ENCODE measurements at regions of chr12 and their contacts with region 1.

Region 1: DNA sequence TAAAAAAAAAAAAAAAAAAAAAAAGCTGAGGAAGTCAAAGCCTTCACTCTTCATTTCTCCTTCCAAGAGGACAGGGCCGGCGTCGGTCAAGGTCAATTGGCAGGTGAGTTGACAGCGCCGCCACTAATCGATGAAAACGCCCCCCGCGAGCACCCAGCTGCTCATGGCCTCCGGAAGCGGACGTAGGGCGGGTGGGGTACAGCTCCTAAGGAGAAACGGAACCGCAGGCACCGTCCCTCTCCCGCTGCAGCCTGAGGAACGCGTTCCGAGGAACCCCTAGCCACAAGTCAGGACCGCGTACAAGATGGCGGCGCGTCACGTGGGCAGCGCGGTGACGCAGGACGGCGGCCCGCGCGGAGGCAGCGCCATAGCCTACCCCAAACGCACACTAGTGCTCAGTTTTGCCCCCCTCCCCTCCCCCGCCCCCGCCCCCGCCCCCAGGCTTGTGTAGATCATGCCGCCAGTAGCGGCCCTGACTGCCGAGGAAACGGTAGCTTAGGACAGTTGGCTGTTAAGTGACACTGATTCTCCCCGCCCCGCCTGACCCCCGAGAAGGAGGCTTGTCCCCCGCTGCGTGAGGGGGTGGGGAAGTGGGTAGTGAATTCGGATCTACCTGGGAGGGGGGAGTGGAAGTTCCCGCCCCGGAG is at the start of gene ATF1:
- DNase-seq: peak; percentile 94
- CTCF ChIP-seq: no peak

Region 2: GRCh38 chr12:50776749-50777728 is 13.3 kb after region 1 on chr12:
- CTCF ChIA-PET with region 1: interaction called, 53 read pairs
- POLR2A ChIA-PET with region 1: interaction called, 5 read pairs
- DNase-seq: no peak
- CTCF ChIP-seq: no peak

Region 3: GRCh38 chr12:51025836-51026638 is 262.3 kb after region 1 on chr12 and contains the start of gene SLC11A2:
- CTCF ChIA-PET with region 1: interaction called, 14 read pairs
- POLR2A ChIA-PET with region 1: interaction called, 4 read pairs
- DNase-seq: peak; percentile 97
- CTCF ChIP-seq: no peak

Measured in GM10248 (cell line).